H1 (cell line): ENCODE measurements at regions of chr5 and their contacts with region 1.

Region 1: GRCh38 chr5:141245250-141245717 is at the start of gene PCDHB15:
- DNase-seq: peak in 1 of 2 experiments; percentile 83
- H3K4me3 ChIP-seq: peak within 1 kb of the TSS; percentile 19 to 69 (median 44); a peak in 7 of 8 replicates
- H3K27ac ChIP-seq: no peak within 1 kb of the TSS
- H3K4me1 ChIP-seq: peaks cover 0 to 3% (median 0%) of the 10 kb centered on the region in 4 experiments; a peak in 1 of 7 replicates
- H3K27me3 ChIP-seq: no peaks in the 10 kb centered on the region
- CTCF ChIP-seq: peak in 2 of 3 experiments; percentile 61 to 64; a peak in 3 of 4 replicates
- EP300 ChIP-seq: no peak
- POLR2A ChIP-seq: peak in 1 of 2 experiments; percentile 55; a peak in 1 of 3 replicates
- RAD21 ChIP-seq: peak; percentile 78 to 80
- total RNA-seq, gene PCDHB15: 3.9 and 4.0 TPM in 2 replicates

Region 2: GRCh38 chr5:140916349-140916748 is 328.9 kb before region 1 on chr5:
- CTCF ChIA-PET with region 1: no interaction called
- POLR2A ChIA-PET with region 1: no interaction called
- DNase-seq: no peak
- H3K4me3 ChIP-seq: no peak overlapping the region
- H3K27ac ChIP-seq: no peak overlapping the region
- H3K4me1 ChIP-seq: no peaks in the 10 kb centered on the region
- H3K27me3 ChIP-seq: no peaks in the 10 kb centered on the region
- CTCF ChIP-seq: no peak
- EP300 ChIP-seq: no peak
- POLR2A ChIP-seq: no peak
- RAD21 ChIP-seq: no peak

Region 3: DNA sequence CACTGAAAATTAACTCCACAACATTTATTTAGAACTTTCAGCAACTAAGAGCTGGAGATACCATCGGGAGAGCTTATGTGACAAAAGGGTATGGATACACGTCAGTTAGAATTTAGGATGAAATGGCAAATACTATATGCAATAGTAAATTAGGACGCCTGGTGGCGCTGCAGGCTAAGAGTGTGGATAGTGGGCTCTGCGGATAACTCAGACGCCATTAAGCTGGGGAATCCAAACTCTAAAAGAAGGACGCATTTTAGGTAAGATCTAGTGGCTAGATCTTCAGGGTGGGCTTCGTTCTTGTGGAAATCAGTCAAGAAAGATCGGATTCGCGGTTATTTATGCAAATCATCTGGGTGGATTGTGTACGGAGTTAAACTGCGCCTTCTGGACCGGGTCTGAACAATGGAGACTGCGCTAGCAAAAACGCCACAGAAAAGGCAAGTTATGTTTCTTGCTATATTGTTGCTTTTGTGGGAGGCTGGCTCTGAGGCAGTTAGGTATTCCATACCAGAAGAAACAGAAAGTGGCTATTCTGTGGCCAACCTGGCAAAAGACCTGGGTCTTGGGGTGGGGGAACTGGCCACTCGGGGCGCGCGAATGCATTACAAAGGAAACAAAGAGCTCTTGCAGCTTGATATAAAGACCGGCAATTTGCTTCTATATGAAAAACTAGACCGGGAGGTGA is 110.1 kb before region 1 on chr5 and contains the start of gene PCDHB5:
- CTCF ChIA-PET with region 1: interaction called, 13 read pairs
- POLR2A ChIA-PET with region 1: no interaction called
- DNase-seq: peak in 1 of 2 experiments; percentile 86
- H3K4me3 ChIP-seq: peak within 1 kb of the TSS; percentile 60 to 98 (median 64)
- H3K27ac ChIP-seq: peak within 1 kb of the TSS; percentile 70
- H3K4me1 ChIP-seq: no peaks in the 10 kb centered on the region
- H3K27me3 ChIP-seq: no peaks in the 10 kb centered on the region
- CTCF ChIP-seq: peak; percentile 43 to 77 (median 72)
- EP300 ChIP-seq: no peak
- POLR2A ChIP-seq: peak in 1 of 2 experiments; percentile 49; a peak in 1 of 3 replicates
- RAD21 ChIP-seq: peak; percentile 77 to 79
- total RNA-seq, gene PCDHB5: 2.4 and 2.8 TPM in 2 replicates

Region 4: GRCh38 chr5:141208478-141208877 is 36.8 kb before region 1 on chr5 and contains the start of gene PCDHB12:
- CTCF ChIA-PET with region 1: interaction called, 14 read pairs
- POLR2A ChIA-PET with region 1: no interaction called
- DNase-seq: no peak
- H3K4me3 ChIP-seq: peak within 1 kb of the TSS in 2 of 4 experiments; percentile 10 to 34; a peak in 2 of 8 replicates
- H3K27ac ChIP-seq: no peak within 1 kb of the TSS
- H3K4me1 ChIP-seq: no peaks in the 10 kb centered on the region
- H3K27me3 ChIP-seq: no peaks in the 10 kb centered on the region
- CTCF ChIP-seq: peak in 2 of 3 experiments; percentile 11 to 48; a peak in 3 of 4 replicates
- EP300 ChIP-seq: no peak
- POLR2A ChIP-seq: no peak
- RAD21 ChIP-seq: peak; percentile 42 to 45
- total RNA-seq, gene PCDHB12: 2.0 and 3.0 TPM in 2 replicates

Region 5: DNA sequence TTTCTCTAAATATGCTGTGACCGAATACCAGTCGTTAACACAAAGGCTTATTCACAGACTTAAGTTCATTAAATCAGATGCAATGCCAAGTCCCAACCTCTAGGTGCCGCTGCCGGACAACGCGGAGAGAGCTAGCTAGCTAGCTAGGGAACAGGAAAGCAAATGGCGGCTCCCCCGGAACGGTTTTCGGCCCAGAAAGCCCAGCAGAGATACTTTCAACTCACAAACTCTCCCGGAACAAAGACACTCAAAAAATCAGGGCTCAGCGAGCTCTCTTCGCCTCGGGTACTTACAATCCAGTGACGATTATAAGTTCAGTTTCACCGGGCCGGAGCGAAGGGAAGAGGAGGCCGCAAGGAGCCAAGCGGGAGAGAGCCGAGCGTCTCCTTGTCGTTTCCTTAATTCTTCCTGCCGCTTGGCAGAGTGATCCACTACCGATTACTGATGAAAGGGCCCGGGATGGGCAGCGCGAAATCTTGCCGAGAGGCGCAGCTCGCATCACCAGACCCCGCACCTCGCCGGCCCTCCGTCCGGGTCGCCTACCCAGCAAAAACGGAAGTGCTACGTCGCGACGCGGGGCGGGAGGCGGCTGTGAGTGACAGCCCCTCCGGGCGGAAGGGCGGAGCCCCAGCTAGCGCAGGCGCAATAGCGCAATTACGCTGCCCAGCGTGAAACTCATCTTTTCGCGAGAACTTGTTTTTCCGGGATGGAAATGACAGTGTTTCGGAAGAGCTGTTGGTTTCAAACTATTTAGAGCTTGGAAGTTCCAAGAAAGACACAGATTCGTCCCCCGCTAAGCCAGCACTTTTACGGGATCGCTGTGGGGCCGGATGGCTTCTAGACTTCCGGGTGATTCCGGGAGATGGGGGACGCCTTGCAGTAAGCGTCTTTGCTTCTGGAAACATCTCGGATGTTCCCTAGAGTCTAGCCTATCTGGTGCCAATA is 75.2 kb after region 1 on chr5 and contains the start of gene TAF7:
- CTCF ChIA-PET with region 1: interaction called, 30 read pairs
- POLR2A ChIA-PET with region 1: interaction called, 8 read pairs
- DNase-seq: peak; percentile 77 to 95
- H3K4me3 ChIP-seq: peak within 1 kb of the TSS; percentile 79 to 99 (median 92)
- H3K27ac ChIP-seq: peak within 1 kb of the TSS; percentile 95
- H3K4me1 ChIP-seq: no peaks in the 10 kb centered on the region
- H3K27me3 ChIP-seq: no peaks in the 10 kb centered on the region
- CTCF ChIP-seq: peak; percentile 77 to 93 (median 80)
- EP300 ChIP-seq: no peak
- POLR2A ChIP-seq: peak; percentile 95 to 98
- RAD21 ChIP-seq: peak; percentile 45 to 57
- total RNA-seq, gene TAF7: 99.4 and 101 TPM in 2 replicates

Region 6: GRCh38 chr5:141369994-141370848 is 124.9 kb after region 1 on chr5 and contains the start of gene PCDHGB3:
- CTCF ChIA-PET with region 1: interaction called, 10 read pairs
- POLR2A ChIA-PET with region 1: no interaction called
- DNase-seq: no peak
- H3K4me3 ChIP-seq: no peak within 1 kb of the TSS
- H3K27ac ChIP-seq: no peak within 1 kb of the TSS
- H3K4me1 ChIP-seq: no peaks in the 10 kb centered on the region
- H3K27me3 ChIP-seq: no peaks in the 10 kb centered on the region
- CTCF ChIP-seq: peak; percentile 14 to 28 (median 24); a peak in 3 of 4 replicates
- EP300 ChIP-seq: no peak
- POLR2A ChIP-seq: no peak
- RAD21 ChIP-seq: peak; percentile 43 to 50; a peak in 3 of 4 replicates
- total RNA-seq, gene PCDHGB3: 1.3 and 1.6 TPM in 2 replicates

Region 7: GRCh38 chr5:141524604-141525597 is 279.6 kb after region 1 on chr5:
- CTCF ChIA-PET with region 1: interaction called, 27 read pairs
- POLR2A ChIA-PET with region 1: no interaction called
- DNase-seq: peak; percentile 90 to 95
- H3K4me3 ChIP-seq: no peak overlapping the region
- H3K27ac ChIP-seq: peak overlapping the region; percentile 26; the same call in 1 of the 2 replicates
- H3K4me1 ChIP-seq: peaks cover 2 to 15% (median 8%) of the 10 kb centered on the region in 4 experiments; a peak in 6 of 7 replicates
- H3K27me3 ChIP-seq: no peaks in the 10 kb centered on the region
- CTCF ChIP-seq: peak; percentile 99 to 100 (median 99)
- EP300 ChIP-seq: peak in 1 of 2 experiments; percentile 68; a peak in 1 of 3 replicates
- POLR2A ChIP-seq: no peak
- RAD21 ChIP-seq: peak; percentile 90 to 91